ENCODE measurements at regions of chr1 and their contacts with region 1.

Region 1: DNA sequence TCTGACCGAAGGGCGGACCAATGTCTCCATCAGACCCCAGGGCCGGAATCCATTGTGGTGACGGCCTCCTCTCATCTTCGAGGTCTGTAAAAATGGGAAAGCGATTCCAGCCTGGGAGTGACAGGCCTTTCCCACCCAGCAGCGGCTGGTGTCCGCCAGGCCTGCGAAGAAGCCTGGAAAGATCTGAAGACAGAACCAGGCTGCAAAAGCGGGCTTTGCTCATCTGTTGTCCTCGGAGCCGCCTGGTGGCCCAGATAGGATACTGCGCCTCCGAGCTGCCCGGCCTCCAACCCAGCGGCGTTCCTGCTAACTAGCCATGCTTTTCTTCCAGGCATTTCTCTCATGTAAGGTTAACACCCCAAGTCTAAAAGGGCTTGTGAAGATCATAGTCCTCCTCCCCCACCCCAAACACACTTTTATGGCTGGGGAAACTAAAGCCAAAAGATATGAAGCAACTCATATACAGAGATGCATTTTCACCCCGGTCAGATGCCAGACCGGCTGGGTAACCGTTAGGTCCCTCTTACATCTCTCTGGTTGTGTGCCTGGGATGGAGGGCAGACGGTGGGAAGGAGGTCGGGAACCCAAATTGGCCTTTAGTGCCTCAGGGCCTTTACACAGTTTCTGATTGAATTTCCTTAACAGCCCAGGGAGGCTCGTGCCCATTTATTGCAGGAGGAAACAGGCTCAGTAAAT is 1.9 kb upstream of the DHRS3 start:
- DNase-seq: peak; percentile 70
- ATAC-seq: peak; percentile 36
- H3K4me3 ChIP-seq: peak overlapping the region; percentile 91 to 97 (median 94)
- H3K27ac ChIP-seq: peak overlapping the region; percentile 94
- H3K4me1 ChIP-seq: peaks cover 36% of the 10 kb centered on the region
- H3K27me3 ChIP-seq: peaks cover 0 to 3% of the 10 kb centered on the region in 2 experiments; a peak in 1 of 5 replicates
- CTCF ChIP-seq: peak; percentile 94
- EP300 ChIP-seq: no peak
- POLR2A ChIP-seq: no peak
- RAD21 ChIP-seq: peak; percentile 97

Region 2: DNA sequence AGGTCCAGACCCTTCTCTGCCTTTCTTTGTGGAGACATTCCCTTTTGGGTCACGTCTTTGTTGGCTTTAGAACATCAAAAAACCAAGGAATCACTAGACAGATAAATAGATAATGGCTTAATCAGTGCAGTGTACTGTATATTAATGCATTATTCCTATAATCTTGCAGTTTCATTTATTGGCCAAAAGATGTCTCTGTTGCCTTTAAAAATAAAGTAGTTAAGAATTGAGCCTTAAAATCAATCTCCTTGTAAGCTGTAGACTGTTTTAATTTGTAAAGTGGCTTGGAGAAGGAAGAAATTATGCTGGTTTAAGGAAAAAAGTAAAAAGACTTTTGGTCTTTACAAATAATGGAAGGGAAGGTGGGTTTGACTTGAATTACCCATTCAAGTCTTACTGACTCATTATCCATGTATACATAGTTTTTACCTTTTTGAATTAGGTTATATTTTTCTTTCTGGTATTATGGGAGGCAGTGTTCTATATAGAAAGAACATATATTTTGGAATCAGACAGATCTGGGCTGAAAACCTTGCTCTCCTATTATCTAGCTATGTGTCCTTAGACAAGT is 305.5 kb before region 1 on chr1:
- CTCF ChIA-PET with region 1: interaction called, 17 read pairs
- POLR2A ChIA-PET with region 1: interaction called, 32 read pairs
- in situ Hi-C with region 1: loop called (anchors 10 kb)
- intact Hi-C with region 1: loop called (anchors 2 kb)
- DNase-seq: peak; percentile 12
- ATAC-seq: no peak
- H3K4me3 ChIP-seq: no peak overlapping the region
- H3K27ac ChIP-seq: no peak overlapping the region
- H3K4me1 ChIP-seq: peaks cover 5% of the 10 kb centered on the region
- H3K27me3 ChIP-seq: no peaks in the 10 kb centered on the region
- CTCF ChIP-seq: peak; percentile 58
- EP300 ChIP-seq: no peak
- POLR2A ChIP-seq: no peak
- RAD21 ChIP-seq: 0 out of 2 replicates have a peak, but pooled peaks have one; percentile 37

Region 3: GRCh38 chr1:12356004-12356890 is 263.7 kb before region 1 on chr1:
- CTCF ChIA-PET with region 1: no interaction called
- POLR2A ChIA-PET with region 1: interaction called, 14 read pairs
- in situ Hi-C with region 1: no loop called
- intact Hi-C with region 1: no loop called
- DNase-seq: peak; percentile 89
- ATAC-seq: peak; percentile 87
- H3K4me3 ChIP-seq: no peak overlapping the region
- H3K27ac ChIP-seq: peak overlapping the region; percentile 30
- H3K4me1 ChIP-seq: peaks cover 22% of the 10 kb centered on the region
- H3K27me3 ChIP-seq: no peaks in the 10 kb centered on the region
- CTCF ChIP-seq: no peak
- EP300 ChIP-seq: peak in 1 of 2 experiments; percentile 65; a peak in 2 of 4 replicates
- POLR2A ChIP-seq: no peak
- RAD21 ChIP-seq: no peak

Region 4: DNA sequence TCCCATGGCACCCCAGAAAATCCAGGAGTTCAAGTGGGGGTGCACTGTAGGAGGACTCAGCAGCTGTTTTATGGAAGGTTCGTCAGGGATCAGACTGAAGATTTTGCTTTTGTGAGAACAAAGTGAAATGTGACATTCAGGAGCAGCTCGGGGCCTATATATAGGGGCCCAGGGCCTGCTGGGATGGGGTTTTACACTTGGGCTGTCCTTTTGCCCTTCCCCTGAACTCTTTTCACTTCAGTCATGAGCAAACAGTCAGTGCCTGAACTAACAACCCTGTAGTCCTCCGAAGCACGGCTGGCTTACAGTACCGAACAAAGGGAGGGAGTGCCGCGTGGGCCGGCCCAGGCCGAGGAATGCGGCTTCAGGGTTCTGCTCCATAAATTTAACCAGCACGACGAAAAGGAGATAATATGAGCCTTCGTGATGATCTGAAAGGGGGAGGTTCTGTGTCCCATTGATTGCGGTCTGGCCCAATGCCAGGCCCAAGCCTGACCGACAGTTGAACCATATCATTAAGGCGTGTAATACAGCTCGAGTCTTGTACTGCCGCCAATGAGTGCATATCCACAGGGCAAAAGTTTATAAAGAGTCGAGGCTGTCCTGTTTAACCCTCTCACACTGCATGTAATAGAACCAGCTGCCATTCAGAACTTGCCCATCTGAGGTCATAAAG is 141.9 kb before region 1 on chr1:
- CTCF ChIA-PET with region 1: no interaction called
- POLR2A ChIA-PET with region 1: interaction called, 72 read pairs
- in situ Hi-C with region 1: no loop called
- intact Hi-C with region 1: loop called (anchors 5 kb)
- DNase-seq: peak; percentile 99
- ATAC-seq: peak; percentile 98
- H3K4me3 ChIP-seq: peak overlapping the region in 1 of 3 experiments; percentile 24; a peak in 2 of 6 replicates
- H3K27ac ChIP-seq: peak overlapping the region; percentile 63
- H3K4me1 ChIP-seq: peaks cover 77% of the 10 kb centered on the region
- H3K27me3 ChIP-seq: no peaks in the 10 kb centered on the region
- CTCF ChIP-seq: no peak
- EP300 ChIP-seq: peak in 1 of 2 experiments; percentile 76; a peak in 2 of 4 replicates
- POLR2A ChIP-seq: peak; percentile 6 to 55; a peak in 3 of 4 replicates
- RAD21 ChIP-seq: peak; percentile 28; the same call in 1 of the 2 replicates

Region 5: DNA sequence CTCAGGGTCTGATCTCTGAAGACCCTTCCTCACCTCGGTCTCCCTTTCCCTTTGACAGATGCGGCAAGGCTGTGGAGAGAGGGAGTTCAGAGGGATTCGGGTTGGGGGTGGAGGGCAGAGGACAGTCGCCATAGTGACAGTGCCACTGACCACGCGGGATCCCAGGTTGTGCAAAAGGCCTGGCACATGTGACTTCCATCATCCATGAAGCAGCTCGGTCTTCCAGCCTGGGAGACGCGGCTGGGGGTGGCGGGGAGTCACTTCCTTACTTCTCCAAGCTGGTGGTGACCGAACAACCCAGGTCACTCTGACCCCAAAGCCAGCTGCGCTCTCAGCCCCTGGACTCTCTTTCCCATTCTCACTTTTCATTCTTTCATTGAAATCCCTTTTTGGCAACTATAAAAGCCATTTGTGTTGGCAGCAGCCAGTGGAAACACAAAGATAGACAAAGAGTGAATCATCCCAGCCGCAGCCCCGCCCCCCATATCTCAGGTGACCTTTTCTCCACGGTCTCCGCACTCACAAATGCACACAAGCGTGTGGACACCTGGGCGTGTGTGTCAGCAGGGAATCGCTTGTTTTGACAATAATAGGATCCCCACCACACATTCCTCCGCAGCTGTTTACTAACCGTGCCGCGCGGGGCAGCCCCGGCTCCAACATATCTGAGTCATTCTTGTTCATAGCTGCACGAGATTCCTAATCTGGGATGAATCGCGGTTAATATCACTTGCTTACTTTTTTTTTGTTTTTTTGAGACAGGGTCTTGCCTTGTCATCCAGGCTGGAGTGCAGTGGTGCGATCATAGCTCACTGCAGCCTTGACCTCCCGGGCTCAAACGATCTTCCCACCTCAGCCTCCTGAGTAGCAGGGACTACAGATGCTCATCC is 70.2 kb before region 1 on chr1:
- CTCF ChIA-PET with region 1: no interaction called
- POLR2A ChIA-PET with region 1: interaction called, 12 read pairs
- in situ Hi-C with region 1: loop called (anchors 5 kb)
- intact Hi-C with region 1: no loop called
- DNase-seq: peak; percentile 90
- ATAC-seq: peak; percentile 47
- H3K4me3 ChIP-seq: peak overlapping the region in 2 of 3 experiments; percentile 10 to 40; a peak in 1 of 6 replicates
- H3K27ac ChIP-seq: no peak overlapping the region
- H3K4me1 ChIP-seq: peaks cover 81% of the 10 kb centered on the region
- H3K27me3 ChIP-seq: peaks cover 2 to 14% of the 10 kb centered on the region in 2 experiments; a peak in 3 of 5 replicates
- CTCF ChIP-seq: no peak
- EP300 ChIP-seq: peak in 1 of 2 experiments; percentile 43; a peak in 3 of 4 replicates
- POLR2A ChIP-seq: no peak
- RAD21 ChIP-seq: no peak

Region 6: DNA sequence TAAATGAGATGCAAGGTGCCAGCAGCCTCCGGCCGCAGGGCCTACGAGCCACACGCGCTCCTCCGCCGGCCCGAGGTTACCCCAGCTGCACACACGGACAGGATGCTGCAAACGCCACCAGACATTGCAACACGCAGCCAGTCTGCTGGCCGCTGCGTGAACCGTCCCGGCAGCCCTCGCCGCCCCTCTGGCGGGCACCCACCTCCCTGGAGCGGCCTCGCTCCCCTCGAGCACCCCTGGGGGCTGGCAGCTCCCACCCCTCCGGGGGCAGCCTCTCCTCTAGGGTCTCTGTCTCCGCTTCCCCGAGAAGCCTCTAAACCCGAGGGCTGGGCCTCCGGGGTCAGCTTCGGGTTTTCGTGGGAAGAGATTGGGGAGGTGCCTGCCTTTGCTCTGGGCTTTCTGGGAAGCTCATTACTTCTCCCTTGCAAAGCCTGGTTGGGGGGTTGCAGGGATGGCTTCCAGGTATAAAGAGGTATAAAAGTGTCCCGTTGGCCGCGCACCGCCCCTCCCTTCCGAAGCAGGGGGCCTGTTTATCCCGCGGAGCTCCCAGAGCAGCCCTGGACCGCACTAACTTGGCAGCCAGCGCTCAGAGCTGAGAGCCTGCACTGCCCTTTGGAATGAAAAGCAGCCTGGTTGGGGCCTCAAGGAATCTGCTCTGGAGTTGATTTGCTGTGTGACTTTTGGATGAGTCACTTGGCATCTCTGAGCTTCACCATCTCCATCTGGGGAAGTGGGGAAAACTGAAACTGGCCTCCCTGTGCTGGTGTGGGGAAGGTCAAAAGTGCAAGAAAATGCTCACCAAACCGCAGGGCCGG is 23.7 kb before region 1 on chr1:
- CTCF ChIA-PET with region 1: interaction called, 56 read pairs
- POLR2A ChIA-PET with region 1: interaction called, 357 read pairs
- in situ Hi-C with region 1: no loop called
- intact Hi-C with region 1: loop called (anchors 1 kb)
- DNase-seq: no peak
- ATAC-seq: peak; percentile 12
- H3K4me3 ChIP-seq: no peak overlapping the region
- H3K27ac ChIP-seq: no peak overlapping the region
- H3K4me1 ChIP-seq: peaks cover 76% of the 10 kb centered on the region
- H3K27me3 ChIP-seq: no peaks in the 10 kb centered on the region
- CTCF ChIP-seq: no peak
- EP300 ChIP-seq: no peak
- POLR2A ChIP-seq: peak in 1 of 2 experiments; percentile 8; a peak in 1 of 4 replicates
- RAD21 ChIP-seq: no peak

Measured in HepG2 (cell line).